Psoas muscle (tissue), 8 donors: ENCODE measurements at regions of chr1 and their contacts with region 1.

Region 1: DNA sequence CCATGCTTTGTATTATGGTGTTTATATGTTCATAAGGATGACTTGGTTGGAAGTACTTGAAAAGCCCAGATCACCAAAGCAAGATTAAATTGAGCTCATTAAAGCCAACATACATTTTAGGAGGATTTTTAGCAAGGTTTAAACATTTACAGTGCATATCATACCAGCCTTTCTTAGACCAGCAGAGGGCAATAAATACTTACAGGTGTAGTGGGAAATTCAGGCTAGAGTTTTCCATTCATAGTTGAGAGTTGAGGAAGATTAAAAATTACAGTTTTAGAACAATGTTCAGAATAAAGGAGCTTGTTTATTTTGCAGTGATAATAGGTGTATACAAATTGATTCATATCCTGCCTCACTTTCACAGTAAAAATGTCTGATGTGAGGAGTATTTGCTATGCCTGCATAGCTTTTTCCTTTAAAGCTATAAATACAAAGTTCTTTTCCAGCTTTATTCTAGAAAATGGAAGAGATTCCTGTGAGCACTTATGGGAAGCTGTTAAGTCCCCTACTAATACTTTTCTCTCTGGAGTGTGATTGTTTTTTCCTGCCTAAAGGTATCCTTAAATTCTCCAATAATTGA is 35.3 kb downstream of the DTL start:
- DNase-seq: no peak
- ATAC-seq: peak; percentile 50 to 57 (median 53)
- H3K4me3 ChIP-seq: no peak overlapping the region
- H3K27ac ChIP-seq: no peak overlapping the region
- H3K4me1 ChIP-seq: peaks cover 2% of the 10 kb centered on the region
- H3K27me3 ChIP-seq: no peaks in the 10 kb centered on the region
- CTCF ChIP-seq: peak; percentile 81

Region 2: DNA sequence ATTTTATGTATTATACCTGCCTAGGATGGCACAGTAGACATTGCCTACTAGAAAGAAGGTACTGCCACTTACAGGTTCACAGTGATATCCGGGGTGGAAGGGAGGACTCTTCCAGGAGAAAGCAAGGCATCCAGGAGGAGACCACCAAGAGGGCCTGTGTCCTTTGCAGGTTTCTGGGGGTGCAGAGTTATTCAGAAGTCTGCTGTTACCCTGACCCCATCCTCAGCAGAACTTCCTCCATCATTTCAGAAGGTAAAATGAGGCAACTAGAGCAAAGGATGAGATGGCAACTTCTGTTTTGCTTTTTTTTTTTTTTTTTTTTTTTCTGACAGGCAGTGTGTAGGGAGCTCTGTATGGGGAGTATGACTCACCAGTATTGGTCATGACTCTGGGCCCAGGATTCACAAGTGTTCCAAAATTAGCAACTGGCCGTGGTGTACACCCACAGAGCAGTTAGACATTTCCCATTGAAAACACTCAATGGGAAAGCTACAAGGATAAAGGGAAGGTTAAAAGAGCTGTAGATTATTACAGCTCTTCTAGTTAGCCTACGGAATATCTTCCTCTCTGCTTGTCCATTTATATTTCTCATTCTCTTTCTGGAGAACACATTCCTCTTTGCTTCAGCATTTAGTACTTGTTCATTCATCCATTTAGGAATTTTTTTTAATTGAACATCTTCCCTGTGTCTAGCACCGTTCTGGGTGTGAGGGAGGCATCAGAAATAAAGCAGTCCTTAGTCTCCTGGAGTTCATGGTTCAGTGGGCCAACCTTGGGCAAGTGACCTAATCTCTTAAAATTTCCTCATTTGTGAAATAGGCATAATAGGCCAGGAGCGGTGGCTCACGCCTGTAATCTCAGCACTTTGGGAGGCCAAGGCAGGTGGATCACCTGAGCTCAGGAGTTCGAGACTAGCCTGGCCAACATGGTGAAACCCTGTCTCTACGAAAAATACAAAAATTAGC is 163.9 kb after region 1 on chr1:
- intact Hi-C with region 1: loop called in 1 of 2 experiments (anchors 5 kb)
- DNase-seq: peak; percentile 26 to 61
- ATAC-seq: peak; percentile 95 to 98 (median 96)
- H3K4me3 ChIP-seq: no peak overlapping the region
- H3K27ac ChIP-seq: peak overlapping the region; percentile 90
- H3K4me1 ChIP-seq: peaks cover 60% of the 10 kb centered on the region
- H3K27me3 ChIP-seq: no peaks in the 10 kb centered on the region
- CTCF ChIP-seq: no peak

Region 3: GRCh38 chr1:212291505-212292134 is 220.8 kb after region 1 on chr1:
- intact Hi-C with region 1: loop called (anchors 1 to 5 kb)
- DNase-seq: no peak
- ATAC-seq: peak in 3 of 4 donors; percentile 56 to 62 (median 59)
- H3K4me3 ChIP-seq: peak overlapping the region; percentile 20
- H3K27ac ChIP-seq: peak overlapping the region; percentile 11
- H3K4me1 ChIP-seq: peaks cover 79% of the 10 kb centered on the region
- H3K27me3 ChIP-seq: no peaks in the 10 kb centered on the region
- CTCF ChIP-seq: peak; percentile 67

Region 4: DNA sequence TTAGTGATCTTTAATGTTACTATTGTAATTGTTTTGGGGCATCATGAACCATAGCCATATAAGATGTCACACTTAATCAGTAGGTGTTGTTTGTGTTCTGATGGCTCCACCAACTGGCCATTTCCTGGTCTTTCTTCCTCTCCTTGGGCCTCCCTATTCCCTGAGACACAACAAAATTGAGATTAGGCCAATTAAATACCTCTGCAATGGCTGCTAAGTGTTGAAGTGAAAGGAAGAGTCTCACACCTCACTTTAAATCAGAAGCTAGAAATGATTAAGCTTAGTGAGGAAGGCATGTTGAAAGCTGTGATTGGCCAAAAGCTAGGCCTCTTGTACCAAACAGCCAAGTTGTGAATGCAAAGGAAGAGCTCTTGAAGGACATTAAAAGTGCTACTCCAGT is 245.1 kb after region 1 on chr1:
- intact Hi-C with region 1: loop called in 1 of 2 experiments (anchors 5 kb)
- DNase-seq: no peak
- ATAC-seq: peak in 3 of 4 donors; percentile 49 to 63 (median 52)
- H3K4me3 ChIP-seq: no peak overlapping the region
- H3K27ac ChIP-seq: no peak overlapping the region
- H3K4me1 ChIP-seq: peaks cover 56% of the 10 kb centered on the region
- H3K27me3 ChIP-seq: no peaks in the 10 kb centered on the region
- CTCF ChIP-seq: peak; percentile 26

Region 5: DNA sequence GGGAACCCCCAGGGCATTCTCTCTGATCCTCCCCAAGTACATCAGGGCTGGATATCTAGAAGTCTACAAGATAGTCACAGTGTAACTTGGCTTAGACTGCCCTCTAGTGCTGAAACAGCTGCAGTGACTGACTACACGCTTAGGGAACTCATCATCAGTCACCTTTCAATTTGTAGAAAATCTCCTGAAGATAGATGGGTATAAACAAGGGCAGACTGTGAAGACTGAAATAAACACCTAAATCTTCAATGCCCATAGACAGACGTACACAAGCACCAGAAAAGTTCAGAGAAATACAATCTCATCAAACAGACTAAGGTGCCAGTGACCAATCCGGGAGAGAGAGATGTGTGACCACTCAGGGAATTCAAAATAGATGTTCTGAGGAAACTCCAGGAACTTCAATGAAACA is 297.3 kb after region 1 on chr1:
- intact Hi-C with region 1: loop called (anchors 2 to 5 kb)
- DNase-seq: no peak
- ATAC-seq: peak; percentile 83 to 92 (median 84)
- H3K4me3 ChIP-seq: no peak overlapping the region
- H3K27ac ChIP-seq: no peak overlapping the region
- H3K4me1 ChIP-seq: peaks cover 7% of the 10 kb centered on the region
- H3K27me3 ChIP-seq: no peaks in the 10 kb centered on the region
- CTCF ChIP-seq: peak; percentile 74